CD4-positive, alpha-beta memory T cell (primary cell): ENCODE measurements at regions of chr2 and their contacts with region 1.

Region 1: GRCh38 chr2:174748948-174749347 is 15.3 kb downstream of the CHRNA1 start:
- DNase-seq: peak; percentile 72 to 76 (median 73)
- H3K4me3 ChIP-seq: no peak overlapping the region
- H3K4me3 Mint-ChIP-seq: peak overlapping the region in 2 of 8 donors; percentile 53 to 71
- H3K27ac ChIP-seq: no peak overlapping the region
- H3K27ac Mint-ChIP-seq: peak overlapping the region; percentile 66 to 95 (median 89)
- H3K4me1 ChIP-seq: peaks cover 50% of the 10 kb centered on the region
- H3K4me1 Mint-ChIP-seq: peaks cover 27 to 46% (median 39%) of the 10 kb centered on the region in 4 donors
- H3K27me3 ChIP-seq: no peaks in the 10 kb centered on the region
- H3K27me3 Mint-ChIP-seq: no peaks in the 10 kb centered on the region

Region 2: DNA sequence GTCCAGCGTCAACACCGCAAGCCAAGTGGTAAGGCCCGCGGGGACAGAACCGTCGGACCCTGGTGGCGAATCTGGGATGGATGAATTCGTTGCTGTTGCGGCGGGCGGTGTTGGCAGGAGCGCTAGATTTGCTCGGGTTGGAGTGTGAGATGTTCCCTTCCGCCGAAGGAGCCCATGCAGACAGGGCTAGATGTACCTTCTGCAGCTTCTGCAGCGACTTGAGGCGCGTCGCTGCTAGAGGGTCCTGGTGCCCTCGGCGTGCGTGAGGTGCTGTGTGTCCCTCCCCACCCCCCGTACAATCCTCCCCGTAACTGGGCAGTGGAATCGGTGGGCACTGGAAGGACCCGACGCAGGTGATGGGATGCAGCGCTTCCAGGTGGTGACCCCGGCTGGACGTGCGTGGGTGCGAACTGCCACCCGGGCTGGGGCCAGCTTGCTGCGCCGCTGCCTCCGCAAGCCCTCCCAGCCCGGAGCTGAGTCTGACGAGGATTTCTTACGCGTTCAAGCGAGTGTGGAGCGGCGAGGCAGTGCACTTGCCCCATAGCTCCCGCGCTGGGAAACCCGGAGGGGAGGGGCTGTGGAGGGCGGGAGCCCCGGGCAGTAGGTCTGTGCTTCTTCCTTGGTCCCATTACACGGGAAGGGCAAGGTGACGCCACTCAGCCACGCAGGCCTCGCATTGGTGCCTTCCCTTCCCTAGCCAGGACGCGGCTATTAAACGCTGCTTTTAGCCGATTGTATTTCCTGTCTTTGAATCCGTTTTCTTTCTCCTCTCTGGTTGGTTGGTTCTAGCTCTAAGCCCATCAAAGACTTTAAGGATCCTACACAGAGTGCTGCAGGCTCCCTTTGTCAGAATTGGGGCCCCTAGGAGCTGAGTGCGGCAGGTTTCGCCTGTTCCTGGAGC is 18.9 kb before region 1 on chr2:
- CTCF ChIA-PET with region 1: interaction called, 11 read pairs
- POLR2A ChIA-PET with region 1: interaction called, 7 read pairs
- intact Hi-C with region 1: no loop called
- DNase-seq: peak; percentile 32 to 62 (median 40)
- H3K4me3 ChIP-seq: peak overlapping the region; percentile 17 to 76
- H3K4me3 Mint-ChIP-seq: peak overlapping the region; percentile 86 to 93 (median 90)
- H3K27ac ChIP-seq: no peak overlapping the region
- H3K27ac Mint-ChIP-seq: peak overlapping the region in 6 of 7 donors; percentile 50 to 83 (median 73)
- H3K4me1 ChIP-seq: peaks cover 17% of the 10 kb centered on the region
- H3K4me1 Mint-ChIP-seq: peaks cover 3 to 28% (median 10%) of the 10 kb centered on the region in 4 donors
- H3K27me3 ChIP-seq: no peaks in the 10 kb centered on the region
- H3K27me3 Mint-ChIP-seq: peaks cover 0 to 3% of the 10 kb centered on the region in 2 donors

Region 3: GRCh38 chr2:174764280-174765255 is 15.6 kb after region 1 on chr2 and contains the start of gene CHRNA1:
- CTCF ChIA-PET with region 1: interaction called, 60 read pairs
- POLR2A ChIA-PET with region 1: interaction called, 3 read pairs
- intact Hi-C with region 1: no loop called
- DNase-seq: no peak
- H3K4me3 ChIP-seq: no peak within 1 kb of the TSS
- H3K4me3 Mint-ChIP-seq: no peak within 1 kb of the TSS
- H3K27ac ChIP-seq: no peak within 1 kb of the TSS
- H3K27ac Mint-ChIP-seq: peak within 1 kb of the TSS in 1 of 7 donors; percentile 66
- H3K4me1 ChIP-seq: no peaks in the 10 kb centered on the region
- H3K4me1 Mint-ChIP-seq: peaks cover 0 to 3% (median 0%) of the 10 kb centered on the region in 4 donors
- H3K27me3 ChIP-seq: no peaks in the 10 kb centered on the region
- H3K27me3 Mint-ChIP-seq: peaks cover 0 to 3% of the 10 kb centered on the region in 2 donors
- total RNA-seq, gene CHRNA1: not detected

Region 4: DNA sequence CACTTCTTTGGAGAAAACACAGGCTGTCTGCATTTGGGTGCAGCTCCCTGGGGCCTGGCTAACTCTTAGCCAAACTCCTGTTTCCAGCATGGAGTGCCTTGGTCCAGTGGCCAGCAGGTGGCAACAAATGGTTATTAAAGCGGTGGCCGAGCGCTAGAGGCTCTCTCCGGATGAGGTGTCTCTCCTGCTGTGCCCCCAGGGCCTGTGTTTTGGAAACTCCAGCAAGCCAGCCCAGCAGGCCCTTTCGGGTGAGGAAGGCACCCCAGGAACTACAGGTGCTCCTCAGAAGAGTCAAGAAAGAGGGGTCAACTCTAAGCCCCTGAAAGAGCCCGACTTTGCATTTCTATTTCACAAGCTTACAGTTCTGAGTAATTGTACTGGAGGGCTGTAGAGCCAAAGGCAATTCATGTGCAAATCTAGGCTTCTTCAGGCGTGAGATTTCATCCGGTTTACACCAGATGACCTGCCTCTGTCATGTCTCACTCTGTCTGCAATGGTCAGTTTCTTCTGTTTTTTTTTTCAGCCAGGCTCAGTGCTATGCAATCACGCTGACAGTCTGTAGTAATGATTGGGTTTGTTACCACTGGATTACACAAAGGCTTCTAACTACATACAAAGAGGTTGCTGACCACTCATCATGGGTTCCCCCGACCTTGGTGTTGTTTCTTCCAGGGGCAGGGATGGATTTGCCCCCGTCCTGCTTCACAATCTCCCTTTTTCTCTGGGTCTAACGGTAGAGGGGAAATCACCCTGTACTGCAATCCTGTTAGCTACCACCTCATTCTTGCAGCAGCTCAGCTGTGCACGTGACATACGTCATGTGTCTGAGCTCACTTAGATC is 22.9 kb after region 1 on chr2:
- CTCF ChIA-PET with region 1: interaction called, 60 read pairs
- POLR2A ChIA-PET with region 1: interaction called, 4 read pairs
- intact Hi-C with region 1: no loop called
- DNase-seq: no peak
- H3K4me3 ChIP-seq: no peak overlapping the region
- H3K4me3 Mint-ChIP-seq: peak overlapping the region in 1 of 8 donors; percentile 3
- H3K27ac ChIP-seq: no peak overlapping the region
- H3K27ac Mint-ChIP-seq: peak overlapping the region in 4 of 7 donors; percentile 4 to 82 (median 78)
- H3K4me1 ChIP-seq: peaks cover 13% of the 10 kb centered on the region
- H3K4me1 Mint-ChIP-seq: peaks cover 10 to 23% (median 13%) of the 10 kb centered on the region in 4 donors
- H3K27me3 ChIP-seq: no peaks in the 10 kb centered on the region
- H3K27me3 Mint-ChIP-seq: no peaks in the 10 kb centered on the region

Region 5: GRCh38 chr2:174778085-174778981 is 29.4 kb after region 1 on chr2:
- CTCF ChIA-PET with region 1: interaction called, 60 read pairs
- POLR2A ChIA-PET with region 1: interaction called, 4 read pairs
- intact Hi-C with region 1: loop called (anchors 1 kb)
- DNase-seq: peak; percentile 90 to 95 (median 93)
- H3K4me3 ChIP-seq: no peak overlapping the region
- H3K4me3 Mint-ChIP-seq: peak overlapping the region; percentile 29 to 84 (median 70)
- H3K27ac ChIP-seq: peak overlapping the region; percentile 57
- H3K27ac Mint-ChIP-seq: peak overlapping the region; percentile 91 to 99 (median 98)
- H3K4me1 ChIP-seq: peaks cover 50% of the 10 kb centered on the region
- H3K4me1 Mint-ChIP-seq: peaks cover 35 to 60% (median 47%) of the 10 kb centered on the region in 4 donors
- H3K27me3 ChIP-seq: no peaks in the 10 kb centered on the region
- H3K27me3 Mint-ChIP-seq: no peaks in the 10 kb centered on the region

Region 6: GRCh38 chr2:174985630-174986029 is 236.7 kb after region 1 on chr2:
- CTCF ChIA-PET with region 1: interaction called, 57 read pairs
- POLR2A ChIA-PET with region 1: interaction called, 12 read pairs
- intact Hi-C with region 1: loop called (anchors 1 kb)
- DNase-seq: no peak
- H3K4me3 ChIP-seq: no peak overlapping the region
- H3K4me3 Mint-ChIP-seq: no peak overlapping the region
- H3K27ac ChIP-seq: no peak overlapping the region
- H3K27ac Mint-ChIP-seq: no peak overlapping the region
- H3K4me1 ChIP-seq: no peaks in the 10 kb centered on the region
- H3K4me1 Mint-ChIP-seq: peaks cover 4 to 8% (median 6%) of the 10 kb centered on the region in 4 donors
- H3K27me3 ChIP-seq: peaks cover 3% of the 10 kb centered on the region
- H3K27me3 Mint-ChIP-seq: peaks cover 2 to 3% of the 10 kb centered on the region in 2 donors